Ascending aorta (tissue), 2 donors: ENCODE measurements at regions of chr17 and their contacts with region 1.

Region 1: DNA sequence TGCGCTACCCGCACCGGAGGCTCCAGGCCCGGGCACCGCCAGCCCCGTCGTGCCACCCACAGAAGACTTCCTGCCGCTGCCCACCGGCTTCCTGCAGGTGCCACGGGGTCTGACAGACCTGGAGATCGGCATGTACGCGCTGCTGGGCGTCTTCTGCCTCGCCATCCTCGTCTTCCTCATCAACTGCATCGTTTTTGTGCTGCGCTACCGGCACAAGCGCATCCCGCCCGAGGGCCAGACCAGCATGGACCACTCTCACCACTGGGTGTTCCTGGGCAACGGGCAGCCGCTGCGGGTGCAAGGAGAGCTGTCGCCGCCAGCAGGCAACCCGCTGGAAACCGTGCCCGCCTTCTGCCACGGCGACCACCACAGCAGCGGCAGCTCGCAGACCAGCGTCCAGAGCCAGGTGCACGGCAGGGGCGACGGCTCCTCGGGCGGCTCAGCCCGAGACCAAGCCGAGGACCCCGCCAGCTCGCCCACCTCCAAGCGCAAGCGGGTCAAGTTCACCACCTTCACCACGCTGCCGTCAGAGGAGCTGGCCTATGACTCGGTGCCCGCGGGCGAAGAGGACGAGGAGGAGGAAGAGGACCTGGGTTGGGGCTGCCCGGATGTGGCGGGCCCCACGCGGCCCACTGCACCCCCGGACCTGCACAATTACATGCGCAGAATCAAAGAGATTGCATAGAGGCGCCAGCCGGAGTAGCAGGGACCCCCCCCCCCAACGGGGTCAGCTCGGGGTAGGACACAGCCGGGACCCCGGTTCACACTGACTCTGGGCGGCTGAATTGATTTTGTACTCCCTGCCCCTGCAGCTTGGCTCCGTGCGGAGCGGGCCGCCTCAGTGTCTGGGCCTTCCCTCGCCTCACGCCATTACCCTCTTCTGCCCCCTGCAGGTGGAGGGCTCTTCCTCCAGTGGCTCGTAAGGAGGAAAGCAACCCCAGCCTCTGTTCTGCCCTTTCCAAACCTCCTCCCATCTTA is 58.5 kb downstream of the TMEM132E start:
- DNase-seq: peak in 1 of 2 donors; percentile 68
- H3K4me3 ChIP-seq: peak overlapping the region; percentile 10 to 45
- H3K27ac ChIP-seq: no peak overlapping the region
- H3K4me1 ChIP-seq: peaks cover 0 to 2% of the 10 kb centered on the region in 2 donors
- H3K27me3 ChIP-seq: no peaks in the 10 kb centered on the region
- CTCF ChIP-seq: peak; percentile 38 to 75 (median 62)

Region 2: DNA sequence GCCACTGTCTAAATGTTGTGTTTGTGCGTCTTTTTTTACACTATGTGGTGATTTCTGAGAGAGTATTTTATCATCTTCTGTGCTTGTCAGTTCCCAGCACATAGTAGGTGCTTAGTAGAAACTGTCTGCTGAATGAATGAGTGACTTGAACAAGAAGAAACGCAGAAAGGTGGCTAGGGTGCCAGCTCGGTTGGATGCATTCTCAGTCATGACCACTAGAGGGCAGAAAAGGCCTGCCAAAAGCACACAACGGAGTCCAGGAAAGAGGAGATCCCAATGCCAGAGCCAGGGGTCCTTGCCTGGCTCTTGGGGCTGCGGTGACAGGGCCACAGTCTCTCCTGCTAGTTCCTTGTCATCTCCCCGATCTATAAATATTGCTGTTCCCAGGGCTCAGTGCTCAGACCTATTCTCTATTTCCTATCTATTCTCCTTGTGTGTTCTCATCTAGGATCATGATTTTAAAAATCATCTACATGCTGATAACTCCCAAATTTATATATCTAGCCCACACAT is 217.5 kb before region 1 on chr17:
- intact Hi-C with region 1: loop called (anchors 1 kb)
- DNase-seq: peak in 1 of 2 donors; percentile 81
- H3K4me3 ChIP-seq: no peak overlapping the region
- H3K27ac ChIP-seq: no peak overlapping the region
- H3K4me1 ChIP-seq: no peaks in the 10 kb centered on the region
- H3K27me3 ChIP-seq: no peaks in the 10 kb centered on the region
- CTCF ChIP-seq: peak; percentile 59 to 96 (median 89)

Region 3: GRCh38 chr17:34613064-34614019 is 24.5 kb before region 1 on chr17:
- intact Hi-C with region 1: no loop called
- DNase-seq: no peak
- H3K4me3 ChIP-seq: no peak overlapping the region
- H3K27ac ChIP-seq: no peak overlapping the region
- H3K4me1 ChIP-seq: no peaks in the 10 kb centered on the region
- H3K27me3 ChIP-seq: no peaks in the 10 kb centered on the region
- CTCF ChIP-seq: no peak